Heart right ventricle (tissue), 16 donors: ENCODE measurements at regions of chr2 and their contacts with region 1.

Region 1: DNA sequence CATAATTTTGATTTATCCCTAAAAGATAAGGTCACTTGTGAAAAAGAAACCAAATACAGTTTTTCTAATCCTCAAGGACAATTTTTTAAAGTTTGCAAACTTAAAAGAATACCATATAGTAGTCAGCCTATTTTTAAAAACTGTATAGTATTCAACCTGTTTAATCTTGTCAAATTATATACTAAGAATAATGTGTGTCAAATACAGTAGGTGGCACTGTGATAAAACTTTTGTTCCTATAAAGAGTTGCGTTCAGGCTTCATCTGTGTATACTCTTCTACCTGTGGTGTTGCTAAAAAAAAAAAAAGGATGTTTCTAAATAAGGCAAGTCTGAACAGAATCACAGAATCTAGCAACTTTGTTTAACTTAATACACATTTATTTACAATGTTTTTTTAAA is 68.6 kb downstream of the CCDC138 start:
- DNase-seq: no peak
- ATAC-seq: peak in 3 of 8 donors; percentile 55 to 67 (median 55)
- H3K4me3 ChIP-seq: no peak overlapping the region
- H3K27ac ChIP-seq: no peak overlapping the region
- H3K4me1 ChIP-seq: no peaks in the 10 kb centered on the region
- H3K27me3 ChIP-seq: no peaks in the 10 kb centered on the region
- CTCF ChIP-seq: peak in 6 of 9 donors; percentile 15 to 46 (median 40)

Region 2: GRCh38 chr2:108629417-108629816 is 225.8 kb before region 1 on chr2:
- intact Hi-C with region 1: no loop called
- DNase-seq: no peak
- ATAC-seq: peak in 1 of 8 donors; percentile 34
- H3K4me3 ChIP-seq: no peak overlapping the region
- H3K27ac ChIP-seq: peak overlapping the region in 2 of 10 donors; percentile 11 to 32
- H3K4me1 ChIP-seq: peaks cover 0 to 64% (median 23%) of the 10 kb centered on the region in 9 donors
- H3K27me3 ChIP-seq: no peaks in the 10 kb centered on the region
- CTCF ChIP-seq: no peak

Region 3: GRCh38 chr2:108982259-108982691 is 127.1 kb after region 1 on chr2:
- intact Hi-C with region 1: loop called in 4 of 10 experiments (anchors 5 to 10 kb)
- DNase-seq: no peak
- ATAC-seq: no peak
- H3K4me3 ChIP-seq: no peak overlapping the region
- H3K27ac ChIP-seq: no peak overlapping the region
- H3K4me1 ChIP-seq: no peaks in the 10 kb centered on the region
- H3K27me3 ChIP-seq: peaks cover 0 to 24% (median 5%) of the 10 kb centered on the region in 7 donors
- CTCF ChIP-seq: no peak

Region 4: GRCh38 chr2:108988796-108989713 is 133.9 kb after region 1 on chr2 and contains the start of gene EDAR:
- intact Hi-C with region 1: loop called in 9 of 10 experiments (anchors 1 to 10 kb)
- DNase-seq: peak in 1 of 2 donors; percentile 32
- ATAC-seq: peak; percentile 71 to 93 (median 89)
- H3K4me3 ChIP-seq: peak within 1 kb of the TSS in 3 of 10 donors; percentile 18 to 27 (median 26)
- H3K27ac ChIP-seq: no peak within 1 kb of the TSS
- H3K4me1 ChIP-seq: no peaks in the 10 kb centered on the region
- H3K27me3 ChIP-seq: peaks cover 0 to 22% (median 13%) of the 10 kb centered on the region in 7 donors
- CTCF ChIP-seq: peak in 8 of 9 donors; percentile 41 to 66 (median 55)
- total RNA-seq, gene EDAR: 0.07 to 0.34 TPM in 2 of 10 donors, not detected in the others

Region 5: GRCh38 chr2:108998911-108999310 is 143.7 kb after region 1 on chr2:
- intact Hi-C with region 1: loop called in 2 of 10 experiments (anchors 10 kb)
- DNase-seq: no peak
- ATAC-seq: no peak
- H3K4me3 ChIP-seq: no peak overlapping the region
- H3K27ac ChIP-seq: no peak overlapping the region
- H3K4me1 ChIP-seq: no peaks in the 10 kb centered on the region
- H3K27me3 ChIP-seq: peaks cover 0 to 2% (median 0%) of the 10 kb centered on the region in 7 donors
- CTCF ChIP-seq: no peak